AG04449 (cell line): ENCODE measurements at regions of chr5 and their contacts with region 1.

Region 1: DNA sequence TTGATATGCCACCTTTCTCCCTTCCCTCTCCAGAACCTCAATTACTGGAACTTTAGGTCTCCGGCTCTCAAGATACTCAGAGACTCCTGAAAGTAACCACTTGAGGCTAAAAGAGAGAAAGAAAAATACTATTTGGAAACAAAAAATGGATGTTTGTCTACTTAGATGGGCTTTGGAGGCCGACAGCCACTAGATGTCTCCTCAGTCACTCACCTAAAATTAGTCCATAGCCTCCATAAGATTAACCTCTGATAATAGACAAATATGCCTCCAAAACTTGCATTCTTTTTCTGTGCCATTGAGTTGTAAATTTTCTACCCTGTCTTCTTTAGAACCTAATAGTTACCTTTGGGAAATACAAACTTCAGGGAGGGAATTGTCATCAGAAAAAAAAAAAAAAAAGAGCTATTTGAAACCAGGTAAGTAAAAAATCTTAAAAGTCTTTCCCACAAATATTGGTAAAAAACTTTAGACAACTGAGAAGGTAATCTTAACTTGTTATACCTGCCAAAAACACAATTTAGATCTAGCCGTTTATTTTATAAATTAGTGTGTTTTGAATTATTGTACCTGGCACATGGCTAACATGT is 11.2 kb upstream of the PCDH1 start:
- DNase-seq: no peak
- H3K4me3 ChIP-seq: no peak overlapping the region
- CTCF ChIP-seq: peak; percentile 26

Region 2: DNA sequence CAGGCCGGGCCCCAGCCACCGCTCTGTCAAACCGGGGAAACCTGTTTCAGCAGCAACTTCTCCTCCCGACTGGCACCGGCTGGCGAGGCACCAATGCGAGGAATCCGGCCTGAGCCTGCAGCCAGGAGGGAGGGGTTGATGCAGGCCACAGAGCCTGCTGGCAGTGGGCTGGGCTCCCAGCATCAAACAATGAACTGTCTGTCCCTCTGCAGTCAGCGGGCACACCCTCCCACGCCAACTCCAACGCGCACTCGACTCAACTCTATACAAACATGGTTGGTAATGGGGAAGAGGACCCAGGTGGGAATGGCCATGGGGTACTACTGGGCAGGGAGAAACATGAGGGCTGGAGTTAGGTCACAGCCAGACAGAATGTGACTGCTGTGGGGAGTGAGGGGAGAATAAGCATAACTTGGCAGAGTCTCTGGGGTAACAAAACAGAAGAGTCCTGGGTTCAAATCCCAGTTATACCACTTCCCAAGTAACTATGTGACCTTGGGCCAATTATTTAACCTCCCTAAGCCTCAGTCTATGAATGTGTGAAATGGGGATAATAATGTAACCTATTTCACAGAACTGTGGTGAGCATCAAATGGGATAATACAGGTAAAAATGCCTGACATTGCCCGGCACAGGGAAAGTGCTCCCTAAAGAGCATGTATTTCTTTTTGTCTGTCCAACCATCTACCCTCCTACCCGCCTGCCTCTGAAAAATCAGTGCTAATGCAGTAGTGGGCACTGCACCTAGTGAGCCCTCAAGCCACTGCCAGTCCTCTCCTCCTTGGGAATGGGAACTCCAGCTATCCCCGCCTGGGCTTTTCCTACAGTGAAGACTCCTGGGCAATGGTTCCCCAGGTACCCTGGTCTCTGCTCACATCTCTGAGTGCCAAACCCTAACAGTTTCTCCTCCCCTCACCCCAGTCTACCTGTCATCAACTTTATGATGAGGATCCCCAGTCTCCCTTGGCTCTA is 22.9 kb before region 1 on chr5:
- CTCF ChIA-PET with region 1: no interaction called
- POLR2A ChIA-PET with region 1: no interaction called
- DNase-seq: no peak
- H3K4me3 ChIP-seq: no peak overlapping the region
- CTCF ChIP-seq: no peak

Region 3: DNA sequence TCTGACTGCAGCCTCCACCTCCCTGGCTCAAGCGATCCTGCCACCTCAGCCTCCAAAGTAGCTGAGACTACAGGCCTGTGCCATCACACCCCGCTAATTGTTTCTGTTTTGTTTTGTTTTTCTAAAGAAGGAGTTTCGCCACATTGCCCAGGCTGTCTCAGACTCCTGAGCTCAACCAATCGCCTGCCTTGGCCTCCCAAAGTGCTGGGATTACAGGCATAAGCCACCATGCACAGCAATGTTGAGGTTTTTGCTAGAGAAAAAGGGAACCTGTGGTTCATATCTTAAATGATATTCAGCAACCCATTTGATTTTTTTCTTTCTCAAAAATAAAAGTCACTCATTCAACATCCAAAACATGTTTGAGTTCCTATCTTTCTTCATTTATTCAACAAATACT is 13.9 kb after region 1 on chr5:
- CTCF ChIA-PET with region 1: interaction called, 12 read pairs
- POLR2A ChIA-PET with region 1: no interaction called
- DNase-seq: no peak
- H3K4me3 ChIP-seq: no peak overlapping the region
- CTCF ChIP-seq: no peak

Region 4: DNA sequence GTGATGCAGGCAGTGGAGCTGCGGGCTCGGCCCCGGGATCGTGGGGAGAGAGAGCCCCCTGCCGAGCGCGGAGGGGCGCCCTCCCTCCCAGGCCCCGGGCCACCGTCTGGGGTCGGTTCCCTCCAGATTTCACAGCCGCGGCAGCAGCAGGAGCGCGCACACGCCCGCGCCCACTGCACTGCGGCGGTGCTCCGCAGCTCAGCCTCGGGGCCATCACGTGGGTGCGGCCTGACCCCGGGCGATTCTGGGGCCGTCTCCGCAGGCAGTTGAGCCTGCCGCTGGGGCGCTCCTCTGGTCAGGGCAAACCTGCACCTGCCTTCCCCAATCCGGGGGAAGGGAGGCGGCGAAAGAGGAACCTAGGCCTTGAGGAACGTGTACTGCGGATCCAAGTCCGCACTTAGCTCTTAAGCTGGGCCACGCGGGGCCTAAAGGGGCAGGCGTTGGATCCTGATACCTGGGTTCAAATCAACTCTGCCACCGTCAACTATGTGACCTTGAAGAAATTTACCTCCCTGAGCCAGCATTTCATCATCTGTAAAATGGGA is 24.9 kb after region 1 on chr5:
- CTCF ChIA-PET with region 1: interaction called, 13 read pairs
- POLR2A ChIA-PET with region 1: no interaction called
- DNase-seq: no peak
- H3K4me3 ChIP-seq: peak overlapping the region; percentile 37
- CTCF ChIP-seq: peak; percentile 26